Endothelial cell of umbilical vein (primary cell): ENCODE measurements at regions of chr13 and their contacts with region 1.

Region 1: DNA sequence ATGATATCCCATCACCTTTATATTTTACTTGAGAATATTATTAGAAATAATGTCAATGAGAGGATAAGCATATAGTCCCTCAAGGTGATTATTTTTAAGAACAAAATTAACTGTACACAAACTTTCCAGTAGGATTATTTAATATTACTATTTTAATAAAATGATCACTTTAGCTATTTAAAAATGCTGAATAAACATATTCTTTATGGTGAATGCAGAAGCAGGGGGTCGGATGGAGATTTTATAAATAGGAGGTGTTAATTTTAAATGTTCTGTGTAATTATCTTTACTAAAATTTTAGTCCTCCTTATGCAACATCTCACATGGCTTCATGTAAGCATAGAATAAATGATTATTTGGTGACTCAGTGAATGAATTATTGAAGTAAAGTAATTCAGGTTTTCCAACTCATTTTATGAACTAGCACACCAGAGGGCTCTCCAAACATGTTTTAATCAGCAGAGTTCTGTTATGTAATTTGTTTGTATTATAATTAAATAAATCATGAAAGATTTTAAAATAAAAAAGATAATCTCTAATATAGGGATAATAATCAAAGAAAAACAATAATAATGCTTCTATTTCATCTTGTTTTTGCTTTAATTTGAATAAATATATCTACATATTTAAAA is 1635.2 kb downstream of the EFNB2 start:
- DNase-seq: no peak
- H3K4me3 ChIP-seq: no peak overlapping the region
- H3K27ac ChIP-seq: no peak overlapping the region
- H3K4me1 ChIP-seq: no peaks in the 10 kb centered on the region
- H3K27me3 ChIP-seq: no peaks in the 10 kb centered on the region
- CTCF ChIP-seq: no peak
- POLR2A ChIP-seq: no peak

Region 2: DNA sequence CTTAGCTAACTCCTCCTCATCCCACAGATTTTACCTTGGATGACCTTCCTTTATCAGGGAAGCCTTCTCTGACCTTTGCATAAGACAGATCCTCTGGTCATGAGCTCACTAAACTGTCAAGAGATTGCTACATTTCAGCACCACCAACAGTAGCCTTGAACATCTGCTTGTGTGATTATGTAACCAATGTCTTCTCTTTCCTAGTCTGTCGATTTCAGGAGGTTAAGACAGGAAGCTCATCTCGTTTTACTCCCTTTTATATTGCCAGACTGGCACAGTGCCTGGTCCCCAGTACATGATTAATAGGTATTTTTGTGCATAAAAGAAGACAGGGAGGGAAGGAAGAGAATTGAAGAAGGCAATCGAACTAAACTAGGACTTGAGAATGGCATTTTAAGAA is 62.5 kb before region 1 on chr13:
- CTCF ChIA-PET with region 1: no interaction called
- POLR2A ChIA-PET with region 1: no interaction called
- dilution Hi-C with region 1: no loop called
- intact Hi-C with region 1: no loop called
- DNase-seq: no peak
- H3K4me3 ChIP-seq: no peak overlapping the region
- H3K27ac ChIP-seq: no peak overlapping the region
- H3K4me1 ChIP-seq: no peaks in the 10 kb centered on the region
- H3K27me3 ChIP-seq: no peaks in the 10 kb centered on the region
- CTCF ChIP-seq: no peak
- POLR2A ChIP-seq: no peak

Region 3: GRCh38 chr13:104920091-104920490 is 19.8 kb after region 1 on chr13:
- CTCF ChIA-PET with region 1: no interaction called
- POLR2A ChIA-PET with region 1: no interaction called
- dilution Hi-C with region 1: no loop called
- intact Hi-C with region 1: no loop called
- DNase-seq: no peak
- H3K4me3 ChIP-seq: no peak overlapping the region
- H3K27ac ChIP-seq: no peak overlapping the region
- H3K4me1 ChIP-seq: no peaks in the 10 kb centered on the region
- H3K27me3 ChIP-seq: no peaks in the 10 kb centered on the region
- CTCF ChIP-seq: no peak
- POLR2A ChIP-seq: no peak

Region 4: DNA sequence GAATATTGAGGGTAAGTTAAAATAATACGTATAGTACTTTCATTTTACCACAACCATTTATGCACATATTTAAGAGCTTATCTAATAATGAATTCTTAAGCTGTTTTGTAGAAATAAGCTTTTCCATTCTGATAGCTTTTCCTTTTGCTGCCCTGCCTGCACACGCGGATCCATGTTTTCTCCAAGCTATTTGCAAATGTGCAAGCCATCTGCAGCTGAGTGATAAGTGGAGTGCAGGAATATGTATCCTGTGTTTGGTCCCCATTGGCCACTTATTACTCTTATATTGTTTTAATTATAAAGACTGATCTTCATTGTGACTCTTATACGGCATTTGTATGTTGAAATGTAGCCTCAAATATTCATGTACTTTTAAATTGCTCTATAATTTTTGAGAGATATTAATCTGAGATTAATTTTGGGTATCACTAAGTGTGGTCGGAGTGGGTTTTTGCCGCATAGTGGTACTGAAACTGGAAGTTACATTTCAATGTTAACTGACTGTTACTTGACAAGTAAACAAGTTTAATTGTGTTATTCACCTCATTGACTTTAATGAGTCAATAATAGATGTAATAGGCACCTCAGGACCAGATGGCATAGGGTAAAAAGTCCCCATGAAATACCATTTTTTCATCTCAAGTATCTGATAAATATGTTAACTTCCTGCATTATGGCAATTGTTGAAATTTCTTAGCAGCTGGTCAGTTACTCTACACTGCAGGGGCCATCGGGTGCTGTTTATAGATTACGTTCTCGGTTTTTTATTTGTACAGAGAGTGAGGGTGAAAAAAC is 67.7 kb after region 1 on chr13:
- CTCF ChIA-PET with region 1: no interaction called
- POLR2A ChIA-PET with region 1: no interaction called
- dilution Hi-C with region 1: no loop called
- intact Hi-C with region 1: no loop called
- DNase-seq: peak; percentile 16
- H3K4me3 ChIP-seq: no peak overlapping the region
- H3K27ac ChIP-seq: no peak overlapping the region
- H3K4me1 ChIP-seq: no peaks in the 10 kb centered on the region
- H3K27me3 ChIP-seq: no peaks in the 10 kb centered on the region
- CTCF ChIP-seq: no peak
- POLR2A ChIP-seq: no peak

Region 5: DNA sequence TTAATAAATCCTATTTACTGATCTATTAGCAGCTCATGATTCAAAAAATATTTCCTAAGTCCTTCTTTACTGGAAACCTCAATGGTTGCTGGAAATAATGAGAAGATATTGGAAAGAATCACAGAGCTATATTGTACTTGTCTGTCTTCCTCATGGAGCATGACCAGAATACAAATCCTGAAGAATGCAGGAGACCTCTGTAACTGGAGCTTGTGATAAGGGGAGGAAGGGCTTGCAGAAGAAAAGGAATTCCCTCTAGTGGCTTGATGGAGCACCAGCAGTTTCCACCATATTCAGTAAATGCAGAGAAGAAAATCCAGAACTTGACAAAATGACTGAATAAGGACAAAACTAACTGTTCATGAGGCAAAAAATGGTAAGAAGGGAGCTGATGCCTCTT is 302.1 kb after region 1 on chr13:
- CTCF ChIA-PET with region 1: interaction called, 18 read pairs
- POLR2A ChIA-PET with region 1: no interaction called
- dilution Hi-C with region 1: no loop called
- intact Hi-C with region 1: no loop called
- DNase-seq: peak; percentile 69
- H3K4me3 ChIP-seq: no peak overlapping the region
- H3K27ac ChIP-seq: no peak overlapping the region
- H3K4me1 ChIP-seq: no peaks in the 10 kb centered on the region
- H3K27me3 ChIP-seq: no peaks in the 10 kb centered on the region
- CTCF ChIP-seq: peak; percentile 51 to 70
- POLR2A ChIP-seq: no peak